GM12878 (cell line): ENCODE measurements at regions of chr1 and their contacts with region 1.

Region 1: GRCh38 chr1:160193091-160193819 is 2.9 kb downstream of the CASQ1 start:
- DNase-seq: peak; percentile 48
- ATAC-seq: peak; percentile 86
- H3K4me3 ChIP-seq: no peak overlapping the region
- H3K27ac ChIP-seq: no peak overlapping the region
- H3K4me1 ChIP-seq: peaks cover 21% of the 10 kb centered on the region
- H3K27me3 ChIP-seq: peaks cover 0 to 3% of the 10 kb centered on the region in 2 experiments; a peak in 1 of 4 replicates
- CTCF ChIP-seq: peak; percentile 95 to 99 (median 97); a peak in 5 of 6 replicates
- EP300 ChIP-seq: no peak
- POLR2A ChIP-seq: no peak
- RAD21 ChIP-seq: peak; percentile 100

Region 2: DNA sequence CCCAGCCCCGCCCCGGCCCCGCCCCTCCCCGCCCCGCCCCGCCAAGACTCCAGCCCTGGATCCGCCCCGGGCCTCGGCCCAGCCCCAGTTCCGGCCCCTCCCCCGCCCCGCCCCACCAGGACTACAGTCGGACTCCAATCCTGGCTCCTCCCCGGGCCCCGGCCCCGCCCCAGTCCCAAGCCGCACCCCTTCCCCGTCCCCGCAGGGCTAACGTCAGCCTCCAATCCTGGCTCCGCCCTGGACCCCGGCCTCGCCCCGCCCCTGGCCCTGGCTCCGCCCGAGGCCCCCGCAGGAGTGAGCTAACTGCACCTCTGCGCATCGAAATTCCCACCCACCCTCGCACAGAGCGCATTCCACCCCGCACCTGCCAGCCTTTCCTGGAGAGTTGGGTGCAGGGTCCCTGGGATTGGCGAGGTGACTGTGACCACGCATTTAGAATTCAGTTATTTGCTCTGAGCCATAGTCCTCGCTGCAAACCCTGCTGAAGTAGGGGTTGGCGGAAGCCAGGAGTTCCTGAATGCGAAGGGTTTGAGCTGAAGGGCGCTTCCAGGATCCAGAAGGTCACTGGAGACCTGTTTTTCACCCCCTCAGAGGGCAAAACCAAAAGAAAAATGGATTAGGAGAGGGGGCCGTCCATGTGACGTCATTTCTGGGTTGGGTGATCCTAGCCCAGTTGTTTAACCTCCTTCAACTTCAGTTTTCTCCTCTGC is 94.2 kb before region 1 on chr1:
- CTCF ChIA-PET with region 1: interaction called, 64 read pairs
- POLR2A ChIA-PET with region 1: interaction called, 3 read pairs
- RAD21 ChIA-PET with region 1: interaction called, 18 read pairs
- SMC1A ChIA-PET with region 1: interaction called, 17 read pairs
- in situ Hi-C with region 1: no loop called
- intact Hi-C with region 1: loop called (anchors 1 kb)
- DNase-seq: peak; percentile 55
- ATAC-seq: peak; percentile 85
- H3K4me3 ChIP-seq: peak overlapping the region; percentile 82
- H3K27ac ChIP-seq: peak overlapping the region; percentile 54; the same call in 1 of the 2 replicates
- H3K4me1 ChIP-seq: peaks cover 25% of the 10 kb centered on the region
- H3K27me3 ChIP-seq: no peaks in the 10 kb centered on the region
- CTCF ChIP-seq: no peak
- EP300 ChIP-seq: no peak
- POLR2A ChIP-seq: no peak
- RAD21 ChIP-seq: no peak

Region 3: DNA sequence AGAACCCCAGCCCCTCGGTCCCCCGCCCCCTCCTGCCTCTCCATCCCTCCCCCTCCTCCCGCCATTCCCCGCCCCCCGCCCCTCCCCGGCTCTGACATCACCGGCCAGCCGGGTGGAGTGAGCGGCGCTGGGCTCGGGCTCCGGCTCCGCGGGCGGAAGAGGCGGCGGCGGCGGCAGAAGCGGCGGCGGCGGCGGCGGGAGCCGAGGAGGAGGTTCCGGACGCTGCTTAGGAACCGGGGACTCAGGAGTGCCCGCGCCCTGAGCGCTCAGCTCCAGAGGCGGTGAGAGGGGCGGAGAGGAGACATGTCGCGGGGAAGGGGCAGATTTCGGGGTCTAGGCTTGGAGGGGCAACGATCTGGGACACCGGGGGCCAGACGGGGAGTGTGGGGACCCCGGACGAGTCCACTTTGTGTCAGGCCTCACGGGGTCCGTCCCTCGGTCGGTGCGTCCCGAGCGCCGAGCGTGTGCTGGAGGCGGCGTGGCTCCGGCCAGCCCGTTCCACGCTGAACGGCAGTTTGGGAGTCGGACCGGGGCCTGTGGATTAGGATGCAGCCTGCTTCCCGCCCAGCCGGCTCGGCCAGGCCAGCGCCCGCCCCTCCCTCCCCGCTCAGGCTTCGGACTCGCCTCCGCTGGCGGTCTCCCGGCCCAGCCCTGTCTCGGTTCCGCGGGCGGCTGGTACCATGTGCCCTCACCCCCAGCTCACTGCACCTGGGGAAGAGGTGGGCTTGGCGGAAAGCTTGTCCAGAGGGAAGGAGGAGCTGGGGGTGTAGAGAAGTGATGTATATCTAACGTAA is 12.2 kb after region 1 on chr1 and contains the start of gene PEA15:
- CTCF ChIA-PET with region 1: interaction called, 47 read pairs
- POLR2A ChIA-PET with region 1: interaction called, 15 read pairs
- RAD21 ChIA-PET with region 1: interaction called, 37 read pairs
- SMC1A ChIA-PET with region 1: interaction called, 15 read pairs
- in situ Hi-C with region 1: no loop called
- intact Hi-C with region 1: no loop called
- DNase-seq: no peak
- ATAC-seq: peak; percentile 76
- H3K4me3 ChIP-seq: peak within 1 kb of the TSS; percentile 99
- H3K27ac ChIP-seq: peak within 1 kb of the TSS; percentile 96
- H3K4me1 ChIP-seq: peaks cover 26% of the 10 kb centered on the region
- H3K27me3 ChIP-seq: no peaks in the 10 kb centered on the region
- CTCF ChIP-seq: no peak
- EP300 ChIP-seq: no peak
- POLR2A ChIP-seq: peak; percentile 66; the same call in 1 of the 2 replicates
- RAD21 ChIP-seq: no peak
- polyA plus RNA-seq, gene PEA15: 15.1 to 28.2 TPM

Region 4: DNA sequence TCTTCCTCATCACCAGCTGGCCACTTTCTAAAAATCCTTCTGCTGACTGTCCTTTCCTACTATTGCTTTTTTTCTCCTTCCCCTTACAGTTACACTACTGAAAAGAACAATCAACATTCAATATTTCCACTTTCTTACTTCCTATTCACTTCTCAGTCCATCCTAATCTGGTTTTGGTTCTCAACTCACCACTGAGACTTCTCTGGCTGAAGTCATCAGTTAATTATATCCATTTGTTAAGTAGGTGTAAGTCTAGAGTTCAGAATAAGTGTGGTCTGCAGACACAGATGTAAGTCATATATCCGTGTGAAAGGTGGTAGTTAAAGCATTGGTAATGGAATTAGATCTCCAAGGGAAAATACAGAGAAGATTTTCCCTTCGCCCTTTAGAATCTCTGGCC is 33.4 kb after region 1 on chr1:
- CTCF ChIA-PET with region 1: interaction called, 82 read pairs
- POLR2A ChIA-PET with region 1: no interaction called
- RAD21 ChIA-PET with region 1: interaction called, 35 read pairs
- SMC1A ChIA-PET with region 1: interaction called, 51 read pairs
- in situ Hi-C with region 1: no loop called
- intact Hi-C with region 1: no loop called
- DNase-seq: no peak
- ATAC-seq: peak; percentile 47
- H3K4me3 ChIP-seq: no peak overlapping the region
- H3K27ac ChIP-seq: no peak overlapping the region
- H3K4me1 ChIP-seq: no peaks in the 10 kb centered on the region; the same call in 1 of the 2 replicates
- H3K27me3 ChIP-seq: no peaks in the 10 kb centered on the region
- CTCF ChIP-seq: no peak
- EP300 ChIP-seq: no peak
- POLR2A ChIP-seq: no peak
- RAD21 ChIP-seq: no peak

Region 5: DNA sequence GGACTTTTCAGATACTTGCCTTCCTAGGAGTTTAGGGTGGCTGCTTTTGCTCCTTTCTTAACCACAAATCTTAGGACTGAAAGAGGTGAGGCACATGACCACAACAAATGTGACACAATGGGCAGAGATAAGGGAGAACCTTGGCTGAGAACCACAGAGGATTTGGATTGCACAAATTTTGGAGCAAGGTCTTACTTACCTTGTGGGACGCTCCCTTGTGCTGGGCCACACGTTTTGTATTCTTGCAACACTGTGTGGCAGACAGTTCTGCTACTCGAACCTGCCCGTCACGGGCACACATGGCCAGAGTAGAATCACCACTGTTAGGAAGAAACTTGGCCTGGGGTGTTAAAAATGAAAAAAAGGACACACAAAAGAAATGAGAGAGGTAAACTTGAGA is 45.2 kb after region 1 on chr1:
- CTCF ChIA-PET with region 1: interaction called, 34 read pairs
- POLR2A ChIA-PET with region 1: interaction called, 4 read pairs
- RAD21 ChIA-PET with region 1: interaction called, 12 read pairs
- SMC1A ChIA-PET with region 1: interaction called, 19 read pairs
- in situ Hi-C with region 1: no loop called
- intact Hi-C with region 1: no loop called
- DNase-seq: no peak
- ATAC-seq: no peak
- H3K4me3 ChIP-seq: no peak overlapping the region
- H3K27ac ChIP-seq: no peak overlapping the region
- H3K4me1 ChIP-seq: peaks cover 4% of the 10 kb centered on the region; the same call in 1 of the 2 replicates
- H3K27me3 ChIP-seq: no peaks in the 10 kb centered on the region
- CTCF ChIP-seq: no peak
- EP300 ChIP-seq: no peak
- POLR2A ChIP-seq: no peak
- RAD21 ChIP-seq: no peak

Region 6: GRCh38 chr1:160261893-160262794 is 68.9 kb after region 1 on chr1 and contains the start of gene DCAF8:
- CTCF ChIA-PET with region 1: interaction called, 273 read pairs
- POLR2A ChIA-PET with region 1: interaction called, 3 read pairs
- RAD21 ChIA-PET with region 1: interaction called, 30 read pairs
- SMC1A ChIA-PET with region 1: interaction called, 15 read pairs
- in situ Hi-C with region 1: no loop called
- intact Hi-C with region 1: no loop called
- DNase-seq: peak; percentile 94
- ATAC-seq: peak; percentile 89
- H3K4me3 ChIP-seq: peak within 1 kb of the TSS; percentile 82
- H3K27ac ChIP-seq: peak within 1 kb of the TSS; percentile 90
- H3K4me1 ChIP-seq: peaks cover 3% of the 10 kb centered on the region
- H3K27me3 ChIP-seq: no peaks in the 10 kb centered on the region
- CTCF ChIP-seq: no peak
- EP300 ChIP-seq: no peak
- POLR2A ChIP-seq: peak; percentile 98
- RAD21 ChIP-seq: no peak
- polyA plus RNA-seq, gene DCAF8: 10.4 to 18.7 TPM

Region 7: GRCh38 chr1:160376525-160377131 is 183.4 kb after region 1 on chr1:
- CTCF ChIA-PET with region 1: interaction called, 66 read pairs
- POLR2A ChIA-PET with region 1: no interaction called
- RAD21 ChIA-PET with region 1: interaction called, 28 read pairs
- SMC1A ChIA-PET with region 1: interaction called, 44 read pairs
- in situ Hi-C with region 1: no loop called
- intact Hi-C with region 1: loop called (anchors 1 kb)
- DNase-seq: peak; percentile 36
- ATAC-seq: peak; percentile 92
- H3K4me3 ChIP-seq: no peak overlapping the region
- H3K27ac ChIP-seq: no peak overlapping the region
- H3K4me1 ChIP-seq: peaks cover 15% of the 10 kb centered on the region
- H3K27me3 ChIP-seq: no peaks in the 10 kb centered on the region
- CTCF ChIP-seq: peak; percentile 96 to 99 (median 99); a peak in 5 of 6 replicates
- EP300 ChIP-seq: no peak
- POLR2A ChIP-seq: no peak
- RAD21 ChIP-seq: peak; percentile 95